Activated CD4-positive, alpha-beta T cell treated with anti-CD3 and anti-CD28 coated beads, Interleukin-2, amount 10 ng/mL, durations not matched to agents 7 days and 5 days (primary cell): ENCODE measurements at regions of chr6 and their contacts with region 1.

Region 1: GRCh38 chr6:32402812-32403211 is 4.2 kb downstream of the BTNL2 start:
- DNase-seq: no peak
- H3K4me3 Mint-ChIP-seq: no peak overlapping the region
- H3K27ac Mint-ChIP-seq: no peak overlapping the region
- H3K4me1 Mint-ChIP-seq: no peaks in the 10 kb centered on the region
- H3K27me3 Mint-ChIP-seq: peaks cover 51% of the 10 kb centered on the region

Region 2: DNA sequence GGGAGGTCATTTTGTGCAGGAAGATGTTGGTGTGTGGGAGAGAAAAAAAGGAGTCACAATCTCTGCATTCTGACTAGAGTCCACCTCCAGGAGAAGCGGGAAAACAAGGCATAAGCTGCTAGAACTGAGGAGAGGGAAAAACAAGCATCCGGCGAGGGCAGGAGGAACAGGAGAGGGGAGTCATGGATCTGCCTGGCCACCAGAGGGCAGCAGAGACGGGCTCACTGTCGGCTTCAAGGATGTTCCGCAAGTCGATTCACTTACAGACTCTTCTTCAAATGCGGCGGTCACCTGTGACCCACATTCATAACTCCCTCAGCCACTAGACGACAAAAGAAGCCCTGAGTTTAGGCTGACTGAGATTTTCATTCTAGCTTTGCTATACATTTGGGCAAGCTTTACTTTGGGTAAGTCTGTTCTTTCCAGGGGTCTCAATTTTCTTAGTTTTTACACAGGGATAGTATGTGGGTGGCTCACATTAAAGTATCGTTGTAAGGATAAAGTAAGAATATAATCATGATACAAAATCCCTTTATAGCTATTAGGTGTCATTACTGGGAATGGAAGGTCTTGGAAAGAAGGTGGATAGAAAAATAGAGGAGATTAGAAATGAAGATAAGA is 10.7 kb after region 1 on chr6:
- CTCF ChIA-PET with region 1: interaction called, 10 read pairs
- POLR2A ChIA-PET with region 1: no interaction called
- DNase-seq: peak; percentile 87
- H3K4me3 Mint-ChIP-seq: no peak overlapping the region
- H3K27ac Mint-ChIP-seq: no peak overlapping the region
- H3K4me1 Mint-ChIP-seq: peaks cover 6% of the 10 kb centered on the region
- H3K27me3 Mint-ChIP-seq: peaks cover 48% of the 10 kb centered on the region

Region 3: DNA sequence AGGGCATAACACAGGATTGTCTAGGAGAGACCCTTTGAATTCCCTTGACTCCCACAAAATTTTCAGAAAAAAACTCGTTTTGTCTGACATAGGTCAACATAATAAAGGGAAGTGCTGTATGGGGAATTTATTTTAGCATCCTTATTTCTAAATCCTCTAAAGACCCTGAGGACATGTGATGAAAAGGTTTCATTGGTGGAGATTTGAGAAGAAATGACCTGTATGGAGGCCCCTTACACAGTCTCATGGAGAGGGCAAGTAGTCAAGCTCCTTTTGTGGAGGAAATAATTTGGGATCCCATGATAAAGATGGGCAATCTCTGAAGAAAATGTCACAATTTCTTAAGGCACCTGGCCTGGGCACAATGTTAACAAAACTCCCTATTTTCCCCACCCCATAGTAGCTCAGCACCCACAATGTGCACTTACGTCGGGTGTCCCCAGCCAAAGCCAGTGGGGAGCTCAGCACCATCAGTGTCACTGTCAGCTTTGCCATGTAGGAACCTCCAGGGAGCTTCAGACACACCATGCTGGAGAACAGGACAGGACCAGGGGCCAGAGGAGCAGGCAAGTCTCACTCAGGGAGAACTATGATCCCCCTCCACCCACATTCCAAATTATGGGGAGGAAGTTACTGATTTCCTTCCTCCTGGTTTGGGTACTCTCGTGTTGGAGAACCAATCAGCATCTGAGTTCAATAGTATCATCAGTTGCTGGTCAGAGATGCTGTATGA is 127.1 kb after region 1 on chr6 and contains the start of gene HLA-DRB5:
- CTCF ChIA-PET with region 1: no interaction called
- POLR2A ChIA-PET with region 1: no interaction called
- DNase-seq: peak; percentile 11
- H3K4me3 Mint-ChIP-seq: peak within 1 kb of the TSS; percentile 60
- H3K27ac Mint-ChIP-seq: peak within 1 kb of the TSS; percentile 21
- H3K4me1 Mint-ChIP-seq: no peaks in the 10 kb centered on the region
- H3K27me3 Mint-ChIP-seq: peaks cover 20% of the 10 kb centered on the region
- total RNA-seq, gene HLA-DRB5: 27.9 to 29.2 TPM